Panc1 (cell line): ENCODE measurements at regions of chr6 and their contacts with region 1.

Region 1: DNA sequence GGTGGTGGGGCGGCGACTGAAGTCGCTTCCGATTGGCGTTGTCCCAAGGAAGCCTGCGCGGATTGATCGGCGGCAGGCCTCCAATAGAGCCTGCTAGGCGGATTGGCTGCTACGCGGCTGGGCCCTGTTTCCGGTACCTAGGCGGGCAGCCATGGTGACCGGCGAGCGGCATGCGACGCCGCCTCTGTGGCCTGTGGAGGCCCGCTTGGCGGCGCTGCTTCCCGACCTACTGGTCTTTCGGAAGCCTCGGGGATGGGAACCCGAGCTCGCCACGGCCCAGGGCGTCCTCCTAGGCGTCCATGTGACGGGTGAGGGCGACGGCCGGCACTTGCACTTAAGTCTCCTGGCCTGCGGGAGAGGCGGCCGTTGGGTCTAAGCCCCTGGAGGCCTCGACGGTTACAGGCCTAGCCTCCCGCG is 28.1 kb downstream of the NFYA start:
- DNase-seq: no peak
- ATAC-seq: no peak
- H3K4me3 ChIP-seq: no peak overlapping the region
- H3K27ac ChIP-seq: no peak overlapping the region
- H3K4me1 ChIP-seq: no peaks in the 10 kb centered on the region
- H3K27me3 ChIP-seq: no peaks in the 10 kb centered on the region
- CTCF ChIP-seq: no peak

Region 2: DNA sequence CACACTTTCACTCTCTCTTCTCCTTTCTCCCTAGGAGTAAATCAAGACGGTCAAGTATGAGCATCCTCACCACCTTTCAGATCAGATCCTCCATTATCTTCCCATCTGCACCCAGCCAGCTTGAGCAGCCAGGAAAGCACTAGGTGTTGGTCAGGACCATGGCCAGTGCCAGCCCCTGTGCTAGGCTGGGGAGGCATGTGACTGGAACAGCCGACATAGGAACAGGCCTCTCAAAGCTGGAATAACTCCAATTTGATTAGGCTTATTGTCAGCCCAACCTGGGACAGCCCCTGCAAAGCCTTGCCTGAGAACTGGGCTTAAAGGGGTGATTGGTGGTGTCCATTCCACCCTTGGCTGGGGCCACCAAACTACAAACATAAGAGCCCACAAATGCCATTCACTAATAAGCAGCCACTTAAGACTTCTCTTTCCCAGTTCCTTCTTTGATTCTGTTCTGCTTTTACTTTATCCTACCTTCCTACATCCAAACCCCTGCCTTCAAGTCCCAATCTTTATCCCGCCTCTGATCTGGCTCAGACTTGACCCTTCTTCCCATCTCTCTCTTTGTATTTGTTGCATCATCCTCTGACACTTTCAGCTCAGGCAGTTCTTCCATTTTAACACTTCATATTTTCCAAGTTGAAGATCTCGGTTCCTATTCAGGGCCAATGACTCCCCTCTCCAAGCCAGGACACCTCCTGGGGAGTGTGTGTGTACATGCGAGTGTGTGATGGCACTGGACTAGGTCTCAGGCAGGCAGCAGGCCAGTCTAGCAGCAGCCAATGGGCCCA is 66.5 kb after region 1 on chr6:
- CTCF ChIA-PET with region 1: no interaction called
- POLR2A ChIA-PET with region 1: no interaction called
- in situ Hi-C with region 1: no loop called
- intact Hi-C with region 1: loop called (anchors 10 kb)
- DNase-seq: no peak
- ATAC-seq: no peak
- H3K4me3 ChIP-seq: no peak overlapping the region
- H3K27ac ChIP-seq: no peak overlapping the region
- H3K4me1 ChIP-seq: no peaks in the 10 kb centered on the region
- H3K27me3 ChIP-seq: peaks cover 7% of the 10 kb centered on the region; the same call in 1 of the 2 replicates
- CTCF ChIP-seq: no peak